ENCODE measurements at regions of chr4 and their contacts with region 1.

Region 1: DNA sequence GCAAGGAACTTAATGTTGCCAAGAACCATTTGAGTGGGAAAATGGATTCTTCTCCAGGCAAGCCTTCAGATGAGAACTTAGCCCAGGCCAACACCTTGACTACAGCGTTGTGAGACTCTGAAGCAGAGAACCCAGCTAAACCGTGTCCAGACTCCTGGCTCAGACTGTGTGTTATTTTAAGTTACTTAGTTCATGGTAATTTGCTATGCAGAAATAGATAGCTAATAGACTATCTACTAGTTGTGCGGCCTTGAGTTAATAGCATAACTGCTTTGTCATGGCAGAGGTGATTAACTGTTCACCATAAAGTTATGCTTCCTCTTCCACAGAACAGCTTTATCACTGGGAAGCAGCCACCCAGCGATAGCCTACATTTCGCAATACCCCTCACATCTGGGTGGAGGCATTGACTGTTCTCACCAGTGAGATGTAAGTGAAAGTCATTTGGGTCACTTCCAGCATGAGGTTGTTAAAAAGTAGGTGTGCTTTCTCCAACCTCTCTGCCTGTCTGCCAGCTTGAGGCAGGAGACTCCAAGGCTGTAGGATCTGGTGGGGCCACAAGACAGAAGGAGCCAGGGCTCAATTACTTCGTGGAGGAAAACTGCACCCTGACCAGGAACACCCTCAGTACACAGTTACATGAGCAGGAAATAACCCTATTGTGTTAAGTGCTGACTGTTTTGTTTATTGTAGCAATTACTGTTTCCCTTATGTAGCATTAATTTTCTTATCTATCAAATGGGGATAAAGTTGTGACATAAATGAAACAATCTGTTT is 94.2 kb downstream of the GPAT3 start:
- DNase-seq: peak; percentile 81 to 96 (median 88)
- ATAC-seq: peak; percentile 91
- H3K4me3 ChIP-seq: no peak overlapping the region
- H3K27ac ChIP-seq: peak overlapping the region; percentile 93
- H3K4me1 ChIP-seq: peaks cover 4 to 29% of the 10 kb centered on the region in 2 experiments; a peak in 4 of 5 replicates
- H3K27me3 ChIP-seq: no peaks in the 10 kb centered on the region
- CTCF ChIP-seq: no peak
- EP300 ChIP-seq: peak; percentile 99
- POLR2A ChIP-seq: 0 out of 2 replicates have a peak, but pooled peaks have one; percentile 27
- RAD21 ChIP-seq: no peak

Region 2: GRCh38 chr4:83473423-83473822 is 156.7 kb before region 1 on chr4:
- CTCF ChIA-PET with region 1: no interaction called
- POLR2A ChIA-PET with region 1: no interaction called
- in situ Hi-C with region 1: no loop called
- intact Hi-C with region 1: no loop called
- DNase-seq: no peak
- ATAC-seq: no peak
- H3K4me3 ChIP-seq: no peak overlapping the region
- H3K27ac ChIP-seq: no peak overlapping the region
- H3K4me1 ChIP-seq: no peaks in the 10 kb centered on the region
- H3K27me3 ChIP-seq: no peaks in the 10 kb centered on the region
- CTCF ChIP-seq: no peak
- EP300 ChIP-seq: no peak
- POLR2A ChIP-seq: no peak
- RAD21 ChIP-seq: no peak

Region 3: GRCh38 chr4:83490876-83491450 is 139.2 kb before region 1 on chr4:
- CTCF ChIA-PET with region 1: no interaction called
- POLR2A ChIA-PET with region 1: no interaction called
- in situ Hi-C with region 1: no loop called
- intact Hi-C with region 1: loop called (anchors 1 kb)
- DNase-seq: peak; percentile 63 to 76 (median 70)
- ATAC-seq: peak; percentile 41; the same call in 1 of the 3 replicates
- H3K4me3 ChIP-seq: no peak overlapping the region
- H3K27ac ChIP-seq: no peak overlapping the region
- H3K4me1 ChIP-seq: peaks cover 18 to 23% of the 10 kb centered on the region in 2 experiments; a peak in 4 of 5 replicates
- H3K27me3 ChIP-seq: no peaks in the 10 kb centered on the region
- CTCF ChIP-seq: peak; percentile 68 to 88 (median 77)
- EP300 ChIP-seq: no peak
- POLR2A ChIP-seq: no peak
- RAD21 ChIP-seq: peak; percentile 48 to 66; a peak in 3 of 4 replicates

Region 4: DNA sequence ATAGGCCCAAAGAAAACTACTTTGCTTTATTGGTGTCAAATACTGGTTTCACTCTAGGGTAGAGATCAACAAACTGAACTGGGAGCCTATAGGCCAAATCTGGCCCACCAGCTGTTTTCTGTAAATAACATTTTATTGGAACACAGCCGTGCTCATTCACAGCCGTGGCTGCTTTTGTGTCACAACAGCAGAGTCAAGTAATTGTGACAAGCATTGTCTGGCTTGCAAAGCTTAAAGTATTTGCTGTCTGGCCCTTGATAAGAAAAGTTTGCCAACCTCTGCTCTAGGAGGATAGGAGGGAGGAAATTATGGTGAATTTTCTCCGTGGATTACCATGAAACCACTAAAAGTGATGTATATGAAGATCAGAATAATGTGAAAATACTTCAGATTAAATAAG is 40.9 kb before region 1 on chr4:
- CTCF ChIA-PET with region 1: no interaction called
- POLR2A ChIA-PET with region 1: no interaction called
- in situ Hi-C with region 1: no loop called
- intact Hi-C with region 1: loop called (anchors 5 kb)
- DNase-seq: peak in 2 of 4 experiments; percentile 11 to 65
- ATAC-seq: peak; percentile 74
- H3K4me3 ChIP-seq: no peak overlapping the region
- H3K27ac ChIP-seq: no peak overlapping the region
- H3K4me1 ChIP-seq: peaks cover 0 to 8% of the 10 kb centered on the region in 2 experiments; a peak in 2 of 5 replicates
- H3K27me3 ChIP-seq: no peaks in the 10 kb centered on the region
- CTCF ChIP-seq: no peak
- EP300 ChIP-seq: peak; percentile 21; the same call in 1 of the 2 replicates
- POLR2A ChIP-seq: no peak
- RAD21 ChIP-seq: no peak

Region 5: GRCh38 chr4:83716874-83717273 is 86.7 kb after region 1 on chr4:
- CTCF ChIA-PET with region 1: no interaction called
- POLR2A ChIA-PET with region 1: no interaction called
- in situ Hi-C with region 1: no loop called
- intact Hi-C with region 1: no loop called
- DNase-seq: no peak
- ATAC-seq: no peak
- H3K4me3 ChIP-seq: no peak overlapping the region
- H3K27ac ChIP-seq: no peak overlapping the region
- H3K4me1 ChIP-seq: no peaks in the 10 kb centered on the region
- H3K27me3 ChIP-seq: no peaks in the 10 kb centered on the region
- CTCF ChIP-seq: no peak
- EP300 ChIP-seq: no peak
- POLR2A ChIP-seq: no peak
- RAD21 ChIP-seq: no peak

Region 6: DNA sequence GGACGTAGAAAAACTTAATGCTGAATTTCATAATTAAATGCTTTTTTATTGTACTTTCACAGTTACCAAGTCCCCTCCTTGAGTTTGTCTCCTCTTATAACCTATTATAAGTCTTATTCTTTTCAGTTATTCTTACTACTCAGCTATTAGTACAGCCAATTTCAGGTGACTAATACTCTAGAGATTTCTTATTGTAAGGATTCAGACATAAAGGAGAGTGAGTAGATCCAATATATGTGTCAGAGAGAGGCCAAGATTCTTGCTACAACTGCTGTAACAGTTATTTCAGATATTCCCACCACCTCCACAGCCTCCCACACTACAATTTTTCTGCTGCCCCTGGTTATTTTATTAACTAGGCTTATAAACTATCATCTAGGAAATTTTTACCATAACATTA is 180.3 kb after region 1 on chr4:
- CTCF ChIA-PET with region 1: no interaction called
- POLR2A ChIA-PET with region 1: no interaction called
- in situ Hi-C with region 1: no loop called
- intact Hi-C with region 1: no loop called
- DNase-seq: no peak
- ATAC-seq: no peak
- H3K4me3 ChIP-seq: no peak overlapping the region
- H3K27ac ChIP-seq: no peak overlapping the region
- H3K4me1 ChIP-seq: no peaks in the 10 kb centered on the region
- H3K27me3 ChIP-seq: no peaks in the 10 kb centered on the region
- CTCF ChIP-seq: no peak
- EP300 ChIP-seq: no peak
- POLR2A ChIP-seq: no peak
- RAD21 ChIP-seq: no peak

Region 7: GRCh38 chr4:84235126-84235944 is 605.2 kb after region 1 on chr4:
- CTCF ChIA-PET with region 1: no interaction called
- POLR2A ChIA-PET with region 1: no interaction called
- in situ Hi-C with region 1: no loop called
- intact Hi-C with region 1: no loop called
- DNase-seq: no peak
- ATAC-seq: no peak
- H3K4me3 ChIP-seq: no peak overlapping the region
- H3K27ac ChIP-seq: no peak overlapping the region
- H3K4me1 ChIP-seq: no peaks in the 10 kb centered on the region
- H3K27me3 ChIP-seq: no peaks in the 10 kb centered on the region
- CTCF ChIP-seq: no peak
- EP300 ChIP-seq: no peak
- POLR2A ChIP-seq: no peak
- RAD21 ChIP-seq: no peak

Measured in K562 (cell line).